ENCODE measurements at regions of chr1 and their contacts with region 1.

Region 1: GRCh38 chr1:28208818-28209441 is 23.9 kb downstream of the DNAJC8 start:
- DNase-seq: peak; percentile 71
- H3K4me3 ChIP-seq: no peak overlapping the region
- H3K27ac ChIP-seq: no peak overlapping the region
- H3K4me1 ChIP-seq: no peaks in the 10 kb centered on the region
- H3K27me3 ChIP-seq: no peaks in the 10 kb centered on the region
- CTCF ChIP-seq: peak; percentile 63

Region 2: GRCh38 chr1:28091043-28091781 is 117.7 kb before region 1 on chr1:
- intact Hi-C with region 1: loop called (anchors 2 kb)
- DNase-seq: peak; percentile 94
- H3K4me3 ChIP-seq: no peak overlapping the region
- H3K27ac ChIP-seq: peak overlapping the region; percentile 33
- H3K4me1 ChIP-seq: peaks cover 8% of the 10 kb centered on the region
- H3K27me3 ChIP-seq: no peaks in the 10 kb centered on the region
- CTCF ChIP-seq: peak; percentile 70

Measured in colonic mucosa (tissue), 4 donors.